CD4-positive, alpha-beta T cell (primary cell): ENCODE measurements at regions of chr11 and their contacts with region 1.

Region 1: GRCh38 chr11:62591448-62592145 is at the start of gene TUT1:
- DNase-seq: peak; percentile 91 to 99 (median 95)
- ATAC-seq: peak; percentile 82
- H3K4me3 ChIP-seq: peak within 1 kb of the TSS; percentile 98
- H3K4me3 Mint-ChIP-seq: peak within 1 kb of the TSS; percentile 91
- H3K27ac ChIP-seq: peak within 1 kb of the TSS; percentile 95 to 97
- H3K27ac Mint-ChIP-seq: peak within 1 kb of the TSS; percentile 89
- H3K4me1 ChIP-seq: peaks cover 43% of the 10 kb centered on the region
- H3K4me1 Mint-ChIP-seq: peaks cover 72% of the 10 kb centered on the region
- H3K27me3 ChIP-seq: no peaks in the 10 kb centered on the region
- H3K27me3 Mint-ChIP-seq: no peaks in the 10 kb centered on the region
- CTCF ChIP-seq: no peak
- total RNA-seq, gene TUT1: 25.5 to 26.2 TPM

Region 2: GRCh38 chr11:61495801-61496597 is 1095.6 kb before region 1 on chr11:
- CTCF ChIA-PET with region 1: no interaction called
- POLR2A ChIA-PET with region 1: no interaction called
- intact Hi-C with region 1: no loop called
- DNase-seq: no peak
- ATAC-seq: no peak
- H3K4me3 ChIP-seq: no peak overlapping the region
- H3K4me3 Mint-ChIP-seq: no peak overlapping the region
- H3K27ac ChIP-seq: no peak overlapping the region
- H3K27ac Mint-ChIP-seq: no peak overlapping the region
- H3K4me1 ChIP-seq: no peaks in the 10 kb centered on the region
- H3K4me1 Mint-ChIP-seq: no peaks in the 10 kb centered on the region
- H3K27me3 ChIP-seq: no peaks in the 10 kb centered on the region
- H3K27me3 Mint-ChIP-seq: no peaks in the 10 kb centered on the region
- CTCF ChIP-seq: no peak

Region 3: GRCh38 chr11:62427630-62428233 is 163.9 kb before region 1 on chr11:
- CTCF ChIA-PET with region 1: interaction called, 20 read pairs
- POLR2A ChIA-PET with region 1: interaction called, 12 read pairs
- intact Hi-C with region 1: no loop called
- DNase-seq: peak in 3 of 14 experiments; percentile 22 to 56 (median 48)
- ATAC-seq: no peak
- H3K4me3 ChIP-seq: no peak overlapping the region
- H3K4me3 Mint-ChIP-seq: peak overlapping the region; percentile 38
- H3K27ac ChIP-seq: peak overlapping the region in 1 of 2 donors; percentile 24
- H3K27ac Mint-ChIP-seq: peak overlapping the region; percentile 35
- H3K4me1 ChIP-seq: peaks cover 34% of the 10 kb centered on the region
- H3K4me1 Mint-ChIP-seq: peaks cover 33% of the 10 kb centered on the region
- H3K27me3 ChIP-seq: no peaks in the 10 kb centered on the region
- H3K27me3 Mint-ChIP-seq: no peaks in the 10 kb centered on the region
- CTCF ChIP-seq: no peak

Region 4: DNA sequence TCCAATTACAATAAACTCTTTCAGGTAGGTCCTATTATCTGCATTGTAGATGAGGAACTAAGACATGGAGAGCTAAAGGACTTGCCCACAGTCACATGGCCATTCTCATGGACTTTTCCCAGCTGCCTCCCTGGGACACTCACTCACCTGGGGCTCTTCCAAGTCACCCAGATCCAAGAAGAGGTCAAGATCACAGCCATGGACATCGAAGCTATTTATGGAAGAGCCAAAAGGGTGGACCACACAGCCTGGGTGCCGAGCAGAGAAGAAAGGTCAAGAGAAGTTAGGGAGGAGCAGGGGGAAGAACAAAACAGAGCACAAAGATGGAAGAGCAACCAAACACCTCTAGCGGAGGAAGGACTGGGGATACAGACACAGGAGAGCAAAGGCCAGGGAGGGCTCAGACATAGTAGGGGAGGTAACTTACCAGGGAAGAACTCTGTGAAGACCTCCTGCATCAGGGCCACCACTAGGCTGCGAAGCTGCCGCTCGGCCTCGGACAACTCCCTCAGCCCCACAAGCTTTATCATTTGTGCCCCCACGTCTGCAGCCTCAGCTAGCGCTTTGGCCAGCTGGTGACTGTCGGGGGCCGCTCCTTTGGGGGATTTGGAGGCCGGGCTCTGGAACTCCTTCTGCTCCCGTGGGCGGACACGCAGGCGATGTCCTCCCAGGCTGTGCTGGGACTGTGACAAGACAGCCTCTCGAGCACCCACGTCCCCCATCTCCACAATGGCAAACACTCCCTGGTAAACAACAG is 10.5 kb before region 1 on chr11:
- CTCF ChIA-PET with region 1: no interaction called
- POLR2A ChIA-PET with region 1: interaction called, 127 read pairs
- intact Hi-C with region 1: no loop called
- DNase-seq: no peak
- ATAC-seq: no peak
- H3K4me3 ChIP-seq: no peak overlapping the region
- H3K4me3 Mint-ChIP-seq: no peak overlapping the region
- H3K27ac ChIP-seq: no peak overlapping the region
- H3K27ac Mint-ChIP-seq: no peak overlapping the region
- H3K4me1 ChIP-seq: no peaks in the 10 kb centered on the region
- H3K4me1 Mint-ChIP-seq: no peaks in the 10 kb centered on the region
- H3K27me3 ChIP-seq: no peaks in the 10 kb centered on the region
- H3K27me3 Mint-ChIP-seq: no peaks in the 10 kb centered on the region
- CTCF ChIP-seq: no peak

Region 5: GRCh38 chr11:62645956-62646824 is 54.6 kb after region 1 on chr11 and contains the start of gene GANAB:
- CTCF ChIA-PET with region 1: interaction called, 7 read pairs
- POLR2A ChIA-PET with region 1: interaction called, 44 read pairs
- intact Hi-C with region 1: loop called in 1 of 2 experiments (anchors 5 kb)
- DNase-seq: peak; percentile 97 to 100 (median 99)
- ATAC-seq: peak; percentile 98
- H3K4me3 ChIP-seq: peak within 1 kb of the TSS; percentile 98
- H3K4me3 Mint-ChIP-seq: peak within 1 kb of the TSS; percentile 96
- H3K27ac ChIP-seq: peak within 1 kb of the TSS; percentile 82 to 97
- H3K27ac Mint-ChIP-seq: peak within 1 kb of the TSS; percentile 99
- H3K4me1 ChIP-seq: peaks cover 42% of the 10 kb centered on the region
- H3K4me1 Mint-ChIP-seq: peaks cover 29% of the 10 kb centered on the region
- H3K27me3 ChIP-seq: no peaks in the 10 kb centered on the region
- H3K27me3 Mint-ChIP-seq: no peaks in the 10 kb centered on the region
- CTCF ChIP-seq: no peak
- total RNA-seq, gene GANAB: 181 to 182 TPM

Region 6: GRCh38 chr11:62678770-62679696 is 87.4 kb after region 1 on chr11 and contains the start of gene UBXN1:
- CTCF ChIA-PET with region 1: interaction called, 12 read pairs
- POLR2A ChIA-PET with region 1: interaction called, 94 read pairs
- intact Hi-C with region 1: loop called (anchors 5 kb)
- DNase-seq: peak; percentile 68 to 93 (median 76)
- ATAC-seq: peak; percentile 84
- H3K4me3 ChIP-seq: peak within 1 kb of the TSS; percentile 100
- H3K4me3 Mint-ChIP-seq: peak within 1 kb of the TSS; percentile 91
- H3K27ac ChIP-seq: peak within 1 kb of the TSS; percentile 97
- H3K27ac Mint-ChIP-seq: peak within 1 kb of the TSS; percentile 87
- H3K4me1 ChIP-seq: peaks cover 33% of the 10 kb centered on the region
- H3K4me1 Mint-ChIP-seq: peaks cover 46% of the 10 kb centered on the region
- H3K27me3 ChIP-seq: no peaks in the 10 kb centered on the region
- H3K27me3 Mint-ChIP-seq: no peaks in the 10 kb centered on the region
- CTCF ChIP-seq: no peak
- total RNA-seq, gene UBXN1: 196 to 222 TPM

Region 7: GRCh38 chr11:62753736-62754603 is 162.4 kb after region 1 on chr11 and contains the start of gene ZBTB3:
- CTCF ChIA-PET with region 1: no interaction called
- POLR2A ChIA-PET with region 1: interaction called, 27 read pairs
- intact Hi-C with region 1: no loop called
- DNase-seq: peak; percentile 92 to 100 (median 97)
- ATAC-seq: peak; percentile 93
- H3K4me3 ChIP-seq: peak within 1 kb of the TSS; percentile 80
- H3K4me3 Mint-ChIP-seq: peak within 1 kb of the TSS; percentile 93
- H3K27ac ChIP-seq: peak within 1 kb of the TSS; percentile 84 to 88
- H3K27ac Mint-ChIP-seq: peak within 1 kb of the TSS; percentile 89
- H3K4me1 ChIP-seq: peaks cover 41% of the 10 kb centered on the region
- H3K4me1 Mint-ChIP-seq: peaks cover 35% of the 10 kb centered on the region
- H3K27me3 ChIP-seq: no peaks in the 10 kb centered on the region
- H3K27me3 Mint-ChIP-seq: no peaks in the 10 kb centered on the region
- CTCF ChIP-seq: no peak
- total RNA-seq, gene ZBTB3: 2.3 to 3.5 TPM

Region 8: DNA sequence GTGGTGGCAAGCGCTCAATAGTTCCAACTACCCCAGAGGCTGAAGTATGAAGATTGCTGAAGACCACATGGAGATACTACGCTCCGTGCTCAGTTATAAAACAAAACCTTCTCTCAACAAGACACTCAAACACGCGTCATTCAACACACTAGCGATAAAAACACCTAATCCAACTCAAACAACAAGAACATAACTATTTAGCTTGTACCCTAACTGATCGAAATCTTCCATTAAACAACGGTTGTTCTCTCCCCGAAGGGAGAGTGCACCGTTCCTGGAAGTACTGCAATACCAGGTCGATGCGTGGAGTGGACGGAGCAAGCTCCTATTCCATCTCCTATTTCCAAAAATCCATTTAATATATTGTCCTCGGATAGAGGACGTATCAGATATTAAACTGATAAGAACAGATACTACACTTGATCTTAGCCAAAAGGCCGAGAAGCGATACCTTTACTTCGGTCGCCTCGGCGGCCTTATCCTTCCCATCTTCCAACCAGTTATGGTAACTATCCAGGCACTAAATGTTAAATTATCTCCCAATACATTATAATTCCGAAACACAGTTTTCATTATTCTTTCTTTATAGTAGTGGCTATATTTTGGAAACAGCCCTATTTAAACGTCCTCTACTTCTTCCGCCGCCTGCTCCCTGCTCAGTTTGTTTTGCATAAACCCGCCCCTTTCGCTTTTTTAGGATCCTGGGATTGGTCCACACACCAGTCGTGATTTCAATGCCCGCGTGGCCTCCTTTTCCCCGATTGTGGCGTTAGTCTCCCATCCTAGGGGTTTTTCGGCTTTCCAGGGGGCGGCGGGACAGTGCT is 250.0 kb after region 1 on chr11:
- CTCF ChIA-PET with region 1: no interaction called
- POLR2A ChIA-PET with region 1: interaction called, 73 read pairs
- intact Hi-C with region 1: no loop called
- DNase-seq: peak; percentile 68 to 95 (median 81)
- ATAC-seq: peak; percentile 42
- H3K4me3 ChIP-seq: peak overlapping the region; percentile 72
- H3K4me3 Mint-ChIP-seq: no peak overlapping the region
- H3K27ac ChIP-seq: peak overlapping the region; percentile 97 to 100
- H3K27ac Mint-ChIP-seq: no peak overlapping the region
- H3K4me1 ChIP-seq: peaks cover 44% of the 10 kb centered on the region
- H3K4me1 Mint-ChIP-seq: peaks cover 22% of the 10 kb centered on the region
- H3K27me3 ChIP-seq: no peaks in the 10 kb centered on the region
- H3K27me3 Mint-ChIP-seq: no peaks in the 10 kb centered on the region
- CTCF ChIP-seq: no peak